ENCODE measurements at regions of chr1 and their contacts with region 1.

Region 1: GRCh38 chr1:62687903-62688686 is at the start of gene DOCK7:
- H3K4me3 Mint-ChIP-seq: peak within 1 kb of the TSS; percentile 95
- H3K27ac Mint-ChIP-seq: peak within 1 kb of the TSS; percentile 88
- H3K4me1 Mint-ChIP-seq: peaks cover 62% of the 10 kb centered on the region
- H3K27me3 Mint-ChIP-seq: no peaks in the 10 kb centered on the region

Region 2: DNA sequence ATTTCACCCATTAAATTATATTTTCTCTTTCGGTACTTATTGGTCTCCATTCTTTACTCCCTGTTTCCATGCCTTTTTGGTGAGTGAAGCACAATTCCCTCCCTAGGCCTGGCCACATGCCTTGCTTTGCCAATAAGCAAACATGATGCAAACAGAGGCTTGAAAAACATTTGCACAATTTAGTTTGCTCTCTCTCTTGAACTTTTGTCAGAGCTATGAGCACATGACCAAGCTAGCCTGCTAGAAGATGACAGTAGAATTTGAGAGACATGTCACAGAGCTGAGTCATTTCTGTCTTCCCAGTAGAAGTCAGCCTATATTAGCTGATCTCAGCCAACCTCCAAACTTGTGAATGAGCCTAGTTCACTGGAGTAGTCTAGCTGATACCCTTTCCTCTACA is 66.2 kb before region 1 on chr1:
- intact Hi-C with region 1: loop called (anchors 10 kb)
- H3K4me3 Mint-ChIP-seq: no peak overlapping the region
- H3K27ac Mint-ChIP-seq: peak overlapping the region; percentile 24
- H3K4me1 Mint-ChIP-seq: peaks cover 5% of the 10 kb centered on the region
- H3K27me3 Mint-ChIP-seq: no peaks in the 10 kb centered on the region

Region 3: DNA sequence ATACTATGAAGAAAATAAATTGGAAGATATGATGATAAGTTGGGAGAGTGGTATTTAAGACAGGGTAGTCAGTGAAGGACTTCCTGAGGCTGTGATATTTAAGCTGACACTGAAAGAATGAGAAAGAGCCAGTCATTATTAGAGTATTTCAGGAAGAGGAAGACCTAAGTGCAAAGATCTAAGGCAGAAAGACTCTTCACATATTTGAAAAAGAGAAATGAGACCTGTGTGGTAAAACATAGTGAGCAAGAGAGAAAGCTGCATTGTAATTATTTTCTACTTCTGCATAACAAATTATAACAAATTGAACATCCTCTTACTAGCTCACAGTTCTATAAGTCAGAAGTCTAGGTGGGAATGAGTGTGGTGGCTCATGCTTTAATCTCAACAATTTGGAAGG is 34.7 kb after region 1 on chr1:
- intact Hi-C with region 1: loop called (anchors 1 kb)
- H3K4me3 Mint-ChIP-seq: no peak overlapping the region
- H3K27ac Mint-ChIP-seq: peak overlapping the region; percentile 81
- H3K4me1 Mint-ChIP-seq: peaks cover 49% of the 10 kb centered on the region
- H3K27me3 Mint-ChIP-seq: no peaks in the 10 kb centered on the region

Region 4: DNA sequence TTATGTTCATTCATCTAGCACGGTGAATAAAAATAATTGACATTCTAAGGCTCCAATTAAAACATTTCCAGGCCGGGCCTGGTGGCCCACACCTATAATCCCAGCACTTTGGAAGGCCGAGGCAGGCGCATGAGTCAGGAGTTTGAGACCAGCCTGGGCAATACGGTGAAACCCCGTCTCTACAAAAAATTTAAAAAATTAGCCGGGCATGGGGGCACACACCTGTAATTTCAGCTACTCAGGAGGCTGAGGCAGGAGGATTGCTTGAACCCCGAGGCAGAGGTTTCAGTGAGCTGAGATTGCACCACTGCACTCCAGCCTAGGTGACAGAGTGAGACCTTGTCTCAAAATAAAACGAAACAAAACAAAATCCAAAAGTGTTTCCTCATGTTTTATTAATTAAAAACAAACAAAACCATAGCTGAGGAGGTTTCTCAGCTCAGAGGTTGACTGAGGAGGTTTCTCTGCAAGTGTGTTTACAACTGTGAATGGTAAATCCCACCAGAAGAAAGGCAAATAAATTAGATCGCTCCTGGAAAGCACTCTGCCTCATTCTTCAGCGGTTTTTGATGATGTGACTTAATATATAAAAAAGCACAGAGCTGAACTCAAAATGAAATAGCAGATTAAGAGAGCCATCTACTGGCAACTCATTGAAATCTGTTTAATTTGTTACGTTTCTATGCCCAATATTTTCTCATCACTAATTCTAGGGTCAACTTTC is 58.2 kb after region 1 on chr1:
- intact Hi-C with region 1: loop called (anchors 5 kb)
- H3K4me3 Mint-ChIP-seq: no peak overlapping the region
- H3K27ac Mint-ChIP-seq: no peak overlapping the region
- H3K4me1 Mint-ChIP-seq: peaks cover under 1% of the 10 kb centered on the region
- H3K27me3 Mint-ChIP-seq: peaks cover 6% of the 10 kb centered on the region

Region 5: DNA sequence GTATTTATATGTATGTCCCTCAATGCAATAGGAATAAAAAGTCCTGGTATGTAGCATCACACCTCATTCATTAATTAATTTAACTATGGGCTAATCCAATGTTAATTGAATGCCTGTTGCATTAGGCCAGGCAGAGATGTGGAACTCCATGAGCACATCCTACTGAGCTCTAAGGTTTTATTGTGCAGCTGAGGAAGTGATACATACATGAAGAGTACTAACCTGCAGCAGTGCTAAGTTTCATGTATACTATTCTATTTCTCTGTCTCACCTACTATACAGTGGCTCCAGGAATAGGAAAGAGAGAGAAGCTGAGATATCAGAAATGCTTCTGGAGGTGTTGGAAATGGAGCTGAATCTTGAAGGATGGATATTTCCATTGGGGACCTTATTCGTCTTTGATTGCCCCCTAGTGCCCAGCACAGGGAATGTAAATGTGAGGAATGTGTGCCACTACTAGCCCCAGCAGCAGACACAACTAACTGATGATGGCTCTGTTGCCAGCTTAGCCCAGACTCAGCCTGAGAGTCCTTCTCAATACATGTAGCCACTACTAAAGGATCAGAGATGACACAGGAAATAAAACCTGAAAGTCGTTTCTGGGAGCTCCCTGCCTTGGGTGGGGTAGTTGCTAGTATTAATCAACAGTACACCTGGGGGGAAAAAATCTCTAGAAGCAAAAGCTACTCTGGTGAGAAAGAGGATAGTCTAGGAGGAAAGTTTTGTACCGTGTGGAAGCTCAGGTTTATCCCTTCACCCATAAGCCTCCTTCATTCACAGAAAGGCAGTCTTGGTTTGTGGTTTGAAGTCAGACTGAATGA is 460.9 kb after region 1 on chr1:
- intact Hi-C with region 1: no loop called
- H3K4me3 Mint-ChIP-seq: no peak overlapping the region
- H3K27ac Mint-ChIP-seq: no peak overlapping the region
- H3K4me1 Mint-ChIP-seq: no peaks in the 10 kb centered on the region
- H3K27me3 Mint-ChIP-seq: peaks cover 3% of the 10 kb centered on the region

Measured in dendritic cell treated with granulocyte-macrophage colony-stimulating factor and Interleukin-4, amounts not matched to agents 40 ng/mL and 50 ng/mL, for 4 days (primary cell).